Esophagus squamous epithelium (tissue), 5 donors: ENCODE measurements at regions of chr10 and their contacts with region 1.

Region 1: DNA sequence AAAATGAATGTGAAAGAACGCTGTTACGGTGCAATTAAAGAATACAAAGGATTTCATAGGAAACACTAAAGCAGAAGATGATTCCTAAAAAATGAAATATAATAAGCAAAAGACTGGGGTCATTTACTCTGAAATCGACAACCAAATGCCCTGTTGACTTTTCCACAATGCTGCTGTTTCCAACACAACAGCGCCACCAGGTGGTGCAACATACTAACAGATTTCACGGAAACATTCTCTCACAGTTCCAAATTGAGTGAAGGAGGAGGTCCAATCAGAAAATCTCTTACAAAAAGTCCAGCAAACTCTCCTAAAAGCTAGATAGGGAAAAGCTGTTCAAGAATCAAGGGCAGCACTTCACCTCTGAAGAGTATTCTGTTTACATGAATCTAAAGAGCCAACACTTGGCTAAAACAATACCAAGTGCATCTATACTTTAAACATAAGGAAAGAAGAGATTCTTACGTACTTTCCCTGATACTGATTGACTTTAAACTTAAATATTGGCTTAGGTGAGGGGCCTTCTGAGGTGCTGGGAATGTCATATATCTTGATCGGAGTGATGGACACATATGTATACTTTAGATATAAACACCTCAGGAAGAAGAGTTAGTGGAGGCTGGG is 55.9 kb downstream of the UPF2 start:
- DNase-seq: no peak
- H3K4me3 ChIP-seq: no peak overlapping the region
- H3K27ac ChIP-seq: no peak overlapping the region
- H3K4me1 ChIP-seq: no peaks in the 10 kb centered on the region
- H3K27me3 ChIP-seq: no peaks in the 10 kb centered on the region
- CTCF ChIP-seq: peak; percentile 63 to 88 (median 84)
- POLR2A ChIP-seq: no peak

Region 2: GRCh38 chr10:11782793-11783557 is 203.7 kb before region 1 on chr10:
- intact Hi-C with region 1: loop called (anchors 10 kb)
- DNase-seq: no peak
- H3K4me3 ChIP-seq: no peak overlapping the region
- H3K27ac ChIP-seq: no peak overlapping the region
- H3K4me1 ChIP-seq: no peaks in the 10 kb centered on the region
- H3K27me3 ChIP-seq: no peaks in the 10 kb centered on the region
- CTCF ChIP-seq: peak; percentile 51 to 83 (median 69)
- POLR2A ChIP-seq: no peak

Region 3: GRCh38 chr10:12027539-12027938 is 40.8 kb after region 1 on chr10:
- intact Hi-C with region 1: no loop called
- DNase-seq: no peak
- H3K4me3 ChIP-seq: no peak overlapping the region
- H3K27ac ChIP-seq: no peak overlapping the region
- H3K4me1 ChIP-seq: peaks cover 0 to 5% (median 0%) of the 10 kb centered on the region in 3 donors
- H3K27me3 ChIP-seq: no peaks in the 10 kb centered on the region
- CTCF ChIP-seq: no peak
- POLR2A ChIP-seq: no peak